ENCODE measurements at regions of chr22 and their contacts with region 1.

Region 1: DNA sequence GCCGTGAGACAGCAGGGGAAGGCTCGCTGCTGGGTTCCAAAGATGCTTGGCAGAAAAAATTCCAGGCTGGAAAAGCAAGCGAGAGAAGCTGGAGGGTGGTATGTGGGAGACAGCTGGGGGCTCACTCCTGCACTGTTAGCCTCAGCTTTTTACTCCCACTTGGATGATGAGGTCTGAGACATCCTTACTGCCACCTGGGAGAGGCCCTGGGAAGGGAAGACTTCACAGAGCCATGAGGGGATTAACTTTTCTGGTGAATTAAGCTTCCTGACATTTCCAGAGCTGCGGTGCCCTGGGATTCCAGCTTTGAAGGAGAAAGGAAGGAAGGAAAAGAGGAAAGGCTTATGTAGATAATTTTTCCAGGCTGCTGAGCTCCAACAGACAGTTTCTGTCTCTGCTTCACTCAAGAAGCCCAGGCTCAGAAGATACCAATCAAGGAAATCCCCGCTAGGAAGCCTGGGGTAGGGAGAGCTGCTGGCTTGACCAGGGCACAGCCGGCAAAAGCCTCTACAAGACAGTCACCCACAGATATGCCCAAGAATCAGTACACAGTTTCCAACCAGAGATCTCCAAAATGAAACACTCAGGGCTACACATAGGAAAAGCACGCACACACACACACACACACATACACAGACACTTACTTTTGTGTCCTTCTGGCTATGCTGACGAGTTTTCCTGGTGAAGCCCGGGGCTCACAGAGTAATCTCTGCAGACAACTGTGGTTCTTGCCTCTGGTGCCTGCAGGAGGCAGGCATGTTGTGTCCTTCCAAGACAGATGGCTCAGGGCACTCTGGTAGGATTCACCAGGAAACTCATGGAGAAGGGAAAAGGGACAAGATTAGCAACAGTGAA is 907 bp downstream of the MCHR1 start:
- DNase-seq: no peak
- ATAC-seq: no peak
- H3K4me3 ChIP-seq: no peak overlapping the region
- H3K4me3 Mint-ChIP-seq: no peak overlapping the region
- H3K27ac ChIP-seq: no peak overlapping the region
- H3K27ac Mint-ChIP-seq: no peak overlapping the region
- H3K4me1 ChIP-seq: peaks cover 4 to 7% of the 10 kb centered on the region in 2 donors
- H3K4me1 Mint-ChIP-seq: peaks cover 10% of the 10 kb centered on the region
- H3K27me3 ChIP-seq: peaks cover 0 to 22% (median 10%) of the 10 kb centered on the region in 4 experiments
- H3K27me3 Mint-ChIP-seq: peaks cover 29% of the 10 kb centered on the region
- CTCF ChIP-seq: no peak

Region 2: GRCh38 chr22:40660730-40661129 is 19.5 kb before region 1 on chr22:
- CTCF ChIA-PET with region 1: no interaction called
- POLR2A ChIA-PET with region 1: no interaction called
- intact Hi-C with region 1: no loop called
- DNase-seq: no peak
- ATAC-seq: no peak
- H3K4me3 ChIP-seq: no peak overlapping the region
- H3K4me3 Mint-ChIP-seq: no peak overlapping the region
- H3K27ac ChIP-seq: no peak overlapping the region
- H3K27ac Mint-ChIP-seq: no peak overlapping the region
- H3K4me1 ChIP-seq: peaks cover 7 to 11% of the 10 kb centered on the region in 2 donors
- H3K4me1 Mint-ChIP-seq: peaks cover 13% of the 10 kb centered on the region
- H3K27me3 ChIP-seq: no peaks in the 10 kb centered on the region
- H3K27me3 Mint-ChIP-seq: no peaks in the 10 kb centered on the region
- CTCF ChIP-seq: no peak

Region 3: DNA sequence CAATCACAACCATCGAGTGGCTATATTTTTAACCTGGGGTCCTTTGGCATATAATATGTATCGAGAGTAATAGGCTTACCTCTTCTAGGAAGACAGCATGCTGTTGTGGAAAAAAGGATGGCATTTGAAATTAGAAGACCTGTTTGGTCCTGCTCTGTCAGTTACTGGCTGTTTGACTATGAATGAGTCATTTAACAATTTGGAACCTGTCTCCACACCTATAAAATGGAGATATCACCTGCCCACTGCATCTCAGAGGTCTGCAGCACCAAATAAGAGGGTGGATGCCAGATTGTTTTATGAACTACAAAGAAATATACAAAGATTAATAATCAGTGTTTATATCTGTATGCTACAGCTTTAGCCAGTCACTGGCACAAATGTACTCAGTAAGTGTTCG is 78.2 kb after region 1 on chr22:
- CTCF ChIA-PET with region 1: interaction called, 33 read pairs
- POLR2A ChIA-PET with region 1: no interaction called
- intact Hi-C with region 1: loop called (anchors 1 kb)
- DNase-seq: no peak
- ATAC-seq: no peak
- H3K4me3 ChIP-seq: no peak overlapping the region
- H3K4me3 Mint-ChIP-seq: no peak overlapping the region
- H3K27ac ChIP-seq: no peak overlapping the region
- H3K27ac Mint-ChIP-seq: peak overlapping the region; percentile 11
- H3K4me1 ChIP-seq: peaks cover 12 to 18% of the 10 kb centered on the region in 2 donors
- H3K4me1 Mint-ChIP-seq: peaks cover 21% of the 10 kb centered on the region
- H3K27me3 ChIP-seq: no peaks in the 10 kb centered on the region
- H3K27me3 Mint-ChIP-seq: no peaks in the 10 kb centered on the region
- CTCF ChIP-seq: no peak

Region 4: GRCh38 chr22:40764763-40765441 is 84.7 kb after region 1 on chr22:
- CTCF ChIA-PET with region 1: interaction called, 33 read pairs
- POLR2A ChIA-PET with region 1: no interaction called
- intact Hi-C with region 1: loop called (anchors 1 kb)
- DNase-seq: peak; percentile 77
- ATAC-seq: peak; percentile 94
- H3K4me3 ChIP-seq: peak overlapping the region in 4 of 5 experiments; percentile 23 to 42 (median 28)
- H3K4me3 Mint-ChIP-seq: peak overlapping the region; percentile 71
- H3K27ac ChIP-seq: peak overlapping the region; percentile 81 to 84
- H3K27ac Mint-ChIP-seq: peak overlapping the region; percentile 93
- H3K4me1 ChIP-seq: peaks cover 37 to 44% of the 10 kb centered on the region in 2 donors
- H3K4me1 Mint-ChIP-seq: peaks cover 43% of the 10 kb centered on the region
- H3K27me3 ChIP-seq: no peaks in the 10 kb centered on the region
- H3K27me3 Mint-ChIP-seq: no peaks in the 10 kb centered on the region
- CTCF ChIP-seq: no peak

Region 5: DNA sequence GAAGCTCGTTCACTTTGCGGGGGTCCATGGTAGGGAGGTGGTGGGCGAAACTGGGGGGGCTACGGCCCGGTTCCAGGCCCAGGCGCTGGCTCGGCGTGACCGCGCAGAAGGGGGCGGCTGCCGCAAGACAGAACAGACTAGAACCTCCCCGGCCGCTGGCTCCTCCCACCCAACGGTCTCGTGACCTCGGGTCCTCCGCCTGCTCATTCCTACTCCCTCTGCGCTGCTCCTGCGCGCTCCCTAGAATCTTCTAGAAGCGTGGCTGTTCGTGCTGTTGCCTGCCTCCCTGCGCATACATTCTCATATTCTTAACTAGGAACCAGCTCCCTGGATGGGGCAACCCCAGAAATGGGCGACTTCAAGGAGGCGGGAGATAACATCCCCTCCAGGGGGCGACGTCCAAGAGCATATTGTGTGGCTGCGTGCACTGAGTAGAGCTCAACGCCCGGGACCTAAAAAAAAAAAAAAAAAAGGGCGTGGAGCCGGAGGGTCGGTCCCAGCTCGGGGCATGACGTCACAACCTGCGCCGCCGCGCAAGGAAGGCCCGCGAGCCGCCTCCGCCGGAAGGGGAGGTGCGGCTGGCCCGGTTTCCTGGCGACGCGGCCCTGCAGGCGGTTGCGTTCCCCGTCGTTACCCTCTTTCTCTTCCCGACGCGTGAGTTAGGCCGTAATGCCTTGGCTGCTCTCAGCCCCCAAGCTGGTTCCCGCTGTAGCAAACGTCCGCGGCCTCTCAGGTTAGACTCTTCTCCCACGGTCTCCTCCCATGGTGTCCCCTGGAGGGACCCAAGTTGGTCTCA is 176.5 kb after region 1 on chr22 and contains the starts of genes ST13 and XPNPEP3:
- CTCF ChIA-PET with region 1: interaction called, 10 read pairs
- POLR2A ChIA-PET with region 1: no interaction called
- intact Hi-C with region 1: no loop called
- DNase-seq: peak; percentile 98
- ATAC-seq: peak; percentile 88
- H3K4me3 ChIP-seq: peak within 1 kb of the TSS; percentile 82 to 98 (median 94)
- H3K4me3 Mint-ChIP-seq: peak within 1 kb of the TSS; percentile 97
- H3K27ac ChIP-seq: peak within 1 kb of the TSS; percentile 91 to 94
- H3K27ac Mint-ChIP-seq: peak within 1 kb of the TSS; percentile 100
- H3K4me1 ChIP-seq: peaks cover 24 to 28% of the 10 kb centered on the region in 2 donors
- H3K4me1 Mint-ChIP-seq: peaks cover 46% of the 10 kb centered on the region
- H3K27me3 ChIP-seq: no peaks in the 10 kb centered on the region
- H3K27me3 Mint-ChIP-seq: no peaks in the 10 kb centered on the region
- CTCF ChIP-seq: peak; percentile 71
- total RNA-seq, gene ST13: 175 and 187 TPM in 2 replicates
- total RNA-seq, gene XPNPEP3: 18.9 and 24.2 TPM in 2 replicates

Region 6: GRCh38 chr22:40898850-40899357 is 218.7 kb after region 1 on chr22:
- CTCF ChIA-PET with region 1: interaction called, 44 read pairs
- POLR2A ChIA-PET with region 1: no interaction called
- intact Hi-C with region 1: no loop called
- DNase-seq: peak; percentile 65
- ATAC-seq: peak; percentile 57
- H3K4me3 ChIP-seq: no peak overlapping the region
- H3K4me3 Mint-ChIP-seq: no peak overlapping the region
- H3K27ac ChIP-seq: no peak overlapping the region
- H3K27ac Mint-ChIP-seq: no peak overlapping the region
- H3K4me1 ChIP-seq: no peaks in the 10 kb centered on the region
- H3K4me1 Mint-ChIP-seq: peaks cover 5% of the 10 kb centered on the region
- H3K27me3 ChIP-seq: no peaks in the 10 kb centered on the region
- H3K27me3 Mint-ChIP-seq: no peaks in the 10 kb centered on the region
- CTCF ChIP-seq: peak; percentile 63

Measured in B cell (primary cell).